ENCODE measurements at regions of chr7 and their contacts with region 1.

Region 1: GRCh38 chr7:106022193-106022821 is 59.2 kb downstream of the CDHR3 start:
- DNase-seq: peak; percentile 38 to 96 (median 93)
- ATAC-seq: peak; percentile 89
- H3K4me3 ChIP-seq: peak overlapping the region; percentile 23
- H3K4me3 Mint-ChIP-seq: peak overlapping the region; percentile 43 to 82 (median 68)
- H3K27ac ChIP-seq: peak overlapping the region; percentile 87
- H3K27ac Mint-ChIP-seq: peak overlapping the region; percentile 86 to 99 (median 98)
- H3K4me1 ChIP-seq: peaks cover 30 to 76% of the 10 kb centered on the region in 2 donors
- H3K4me1 Mint-ChIP-seq: peaks cover 23 to 89% (median 85%) of the 10 kb centered on the region in 7 donors
- H3K27me3 ChIP-seq: no peaks in the 10 kb centered on the region
- H3K27me3 Mint-ChIP-seq: peaks cover 0 to 15% (median 0%) of the 10 kb centered on the region in 5 donors

Region 2: GRCh38 chr7:105531792-105532671 is 490.3 kb before region 1 on chr7 and contains the start of gene RINT1:
- CTCF ChIA-PET with region 1: interaction called, 3 read pairs
- POLR2A ChIA-PET with region 1: interaction called, 4 read pairs
- intact Hi-C with region 1: loop called in 1 of 2 experiments (anchors 5 kb)
- DNase-seq: peak; percentile 72 to 90 (median 81)
- ATAC-seq: peak; percentile 97
- H3K4me3 ChIP-seq: peak within 1 kb of the TSS; percentile 86
- H3K4me3 Mint-ChIP-seq: peak within 1 kb of the TSS; percentile 87 to 99 (median 93)
- H3K27ac ChIP-seq: peak within 1 kb of the TSS; percentile 83
- H3K27ac Mint-ChIP-seq: peak within 1 kb of the TSS; percentile 87 to 98 (median 92)
- H3K4me1 ChIP-seq: peaks cover 13 to 18% of the 10 kb centered on the region in 2 donors
- H3K4me1 Mint-ChIP-seq: peaks cover 21 to 59% (median 38%) of the 10 kb centered on the region in 7 donors
- H3K27me3 ChIP-seq: no peaks in the 10 kb centered on the region
- H3K27me3 Mint-ChIP-seq: no peaks in the 10 kb centered on the region
- total RNA-seq, gene RINT1: 23.0 to 31.8 (median 26.0) TPM

Region 3: DNA sequence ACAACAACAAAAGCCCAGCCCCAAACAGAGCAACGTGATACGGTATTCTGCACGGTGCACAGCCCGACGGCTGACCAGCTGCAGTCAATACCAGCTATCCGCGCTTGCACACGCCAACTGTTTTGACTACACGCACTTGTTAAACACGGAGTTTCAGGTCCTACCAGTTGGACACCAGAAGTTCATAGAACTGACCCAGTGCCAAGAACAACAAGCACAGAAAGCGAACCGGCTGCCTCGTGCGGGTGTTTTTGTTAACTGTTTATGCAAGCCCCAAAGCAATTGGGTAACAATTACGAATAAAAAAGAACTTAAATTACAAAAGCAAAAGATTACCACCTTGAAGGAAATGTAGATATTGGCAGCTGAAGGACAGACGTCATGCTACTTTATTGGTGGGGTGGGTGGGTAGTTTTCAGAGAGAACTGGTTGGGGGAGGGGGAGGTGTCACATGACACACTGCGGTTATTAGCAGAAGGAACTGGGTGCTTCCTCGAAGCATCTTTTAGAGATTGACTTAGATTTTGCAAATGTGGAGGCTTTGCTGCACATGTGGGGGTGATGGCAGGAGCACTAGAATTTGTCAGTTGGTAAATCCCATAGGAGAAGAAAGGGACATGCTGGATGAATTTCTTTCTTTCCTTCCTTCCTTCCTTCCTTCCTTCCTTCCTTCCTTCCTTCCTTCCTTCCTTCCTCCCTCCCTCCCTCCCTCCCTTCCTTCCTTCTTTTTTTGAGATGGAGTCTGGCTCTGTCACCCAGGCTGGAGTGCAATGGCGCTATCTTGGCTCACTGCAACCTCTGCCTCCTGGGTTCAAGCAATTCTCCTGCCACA is 330.4 kb before region 1 on chr7:
- CTCF ChIA-PET with region 1: interaction called, 3 read pairs
- POLR2A ChIA-PET with region 1: interaction called, 13 read pairs
- intact Hi-C with region 1: loop called in 1 of 2 experiments (anchors 1 kb)
- DNase-seq: peak; percentile 22 to 94 (median 90)
- ATAC-seq: peak; percentile 89
- H3K4me3 ChIP-seq: peak overlapping the region; percentile 94
- H3K4me3 Mint-ChIP-seq: peak overlapping the region; percentile 84 to 98 (median 92)
- H3K27ac ChIP-seq: peak overlapping the region; percentile 83
- H3K27ac Mint-ChIP-seq: peak overlapping the region; percentile 95 to 100 (median 99)
- H3K4me1 ChIP-seq: peaks cover 19 to 21% of the 10 kb centered on the region in 2 donors
- H3K4me1 Mint-ChIP-seq: peaks cover 33 to 78% (median 65%) of the 10 kb centered on the region in 7 donors
- H3K27me3 ChIP-seq: no peaks in the 10 kb centered on the region
- H3K27me3 Mint-ChIP-seq: no peaks in the 10 kb centered on the region

Region 4: DNA sequence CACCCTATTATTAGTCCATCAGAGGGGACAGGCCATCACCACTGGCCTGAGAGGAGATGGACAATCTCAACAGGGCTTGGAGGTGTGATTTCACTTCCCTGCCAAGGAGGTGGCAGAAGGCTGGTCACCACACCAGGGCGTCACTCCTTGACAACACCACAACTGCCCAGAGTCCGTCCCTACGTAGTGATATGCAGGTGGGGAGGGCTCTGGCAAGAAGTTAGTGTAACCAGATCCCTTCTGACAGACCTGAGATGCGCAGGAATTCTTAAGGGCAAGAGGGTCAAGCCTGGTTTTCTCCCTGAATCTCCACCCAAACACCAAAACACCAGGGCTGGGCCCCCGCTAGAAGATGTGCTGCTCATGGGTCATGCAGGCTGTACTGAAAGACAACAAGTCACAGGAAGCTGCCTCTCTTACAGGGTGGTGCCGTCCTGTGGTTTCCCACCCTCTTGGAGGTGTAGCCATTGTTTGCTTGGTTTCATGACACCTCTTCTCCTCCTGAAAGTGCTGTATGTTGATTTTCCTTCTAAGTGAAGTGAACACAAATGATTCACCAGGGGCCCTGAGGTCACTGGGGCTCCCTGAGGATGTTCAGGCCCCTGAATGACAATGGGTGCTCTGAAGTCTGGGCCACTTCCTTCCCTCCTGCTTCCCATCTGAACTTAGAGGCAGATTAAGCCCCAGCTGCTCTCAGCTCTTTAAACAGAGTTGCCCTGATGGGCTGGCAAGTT is 173.0 kb before region 1 on chr7:
- CTCF ChIA-PET with region 1: interaction called, 3 read pairs
- POLR2A ChIA-PET with region 1: interaction called, 4 read pairs
- intact Hi-C with region 1: loop called in 1 of 2 experiments (anchors 1 kb)
- DNase-seq: peak; percentile 16 to 69 (median 60)
- ATAC-seq: peak; percentile 94
- H3K4me3 ChIP-seq: peak overlapping the region; percentile 38
- H3K4me3 Mint-ChIP-seq: peak overlapping the region; percentile 74 to 85 (median 83)
- H3K27ac ChIP-seq: peak overlapping the region; percentile 43
- H3K27ac Mint-ChIP-seq: peak overlapping the region; percentile 82 to 98 (median 92)
- H3K4me1 ChIP-seq: peaks cover 46 to 47% of the 10 kb centered on the region in 2 donors
- H3K4me1 Mint-ChIP-seq: peaks cover 44 to 78% (median 69%) of the 10 kb centered on the region in 7 donors
- H3K27me3 ChIP-seq: no peaks in the 10 kb centered on the region
- H3K27me3 Mint-ChIP-seq: peaks cover 0 to 2% (median 0%) of the 10 kb centered on the region in 5 donors

Region 5: DNA sequence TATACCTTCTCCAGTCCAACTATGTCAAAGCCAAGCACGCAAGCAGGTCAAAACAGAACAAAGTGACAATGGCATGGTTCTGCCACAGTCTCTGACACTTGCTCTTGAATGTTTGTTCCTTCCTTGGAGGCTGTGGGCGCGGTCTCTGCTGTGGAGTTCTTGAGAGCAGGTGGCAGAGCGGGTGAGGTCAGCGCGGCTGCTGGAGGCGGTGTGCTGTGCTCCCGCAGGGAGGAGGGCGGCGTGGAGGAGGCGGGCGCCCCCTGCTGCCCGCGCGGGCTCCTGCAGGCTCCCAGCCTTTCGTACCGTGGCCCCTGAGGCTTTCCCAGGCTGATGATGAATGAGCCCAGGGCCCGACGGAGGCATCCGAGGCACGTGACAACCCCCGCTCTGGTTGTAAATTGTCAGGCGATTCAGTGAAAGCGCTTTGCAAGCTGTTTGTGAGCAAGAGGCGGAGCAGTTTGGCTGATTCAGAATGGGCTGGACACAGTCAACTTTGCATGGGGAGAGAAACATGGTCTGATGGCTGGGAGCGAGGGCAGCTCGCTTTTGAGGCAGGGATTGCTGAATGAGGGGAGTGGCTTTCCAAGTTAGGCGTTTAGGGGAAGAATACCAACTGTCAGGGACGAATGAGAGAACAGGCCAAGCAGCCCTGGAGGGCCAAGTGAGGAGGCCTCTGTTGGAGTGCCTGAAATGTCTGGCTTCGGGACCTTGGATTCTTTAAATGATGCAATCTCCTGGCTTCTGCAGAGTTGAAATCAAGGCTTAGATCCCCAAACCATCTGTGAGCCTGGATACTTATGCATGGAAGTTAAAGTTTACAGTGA is 12.7 kb before region 1 on chr7:
- CTCF ChIA-PET with region 1: interaction called, 6 read pairs
- POLR2A ChIA-PET with region 1: interaction called, 8 read pairs
- intact Hi-C with region 1: loop called (anchors 1 kb)
- DNase-seq: peak; percentile 73 to 85 (median 81)
- ATAC-seq: peak; percentile 99
- H3K4me3 ChIP-seq: no peak overlapping the region
- H3K4me3 Mint-ChIP-seq: peak overlapping the region in 9 of 10 donors; percentile 36 to 69 (median 55)
- H3K27ac ChIP-seq: no peak overlapping the region
- H3K27ac Mint-ChIP-seq: peak overlapping the region in 7 of 9 donors; percentile 38 to 93 (median 86)
- H3K4me1 ChIP-seq: peaks cover 0 to 30% of the 10 kb centered on the region in 2 donors
- H3K4me1 Mint-ChIP-seq: peaks cover 17 to 51% (median 45%) of the 10 kb centered on the region in 7 donors
- H3K27me3 ChIP-seq: no peaks in the 10 kb centered on the region
- H3K27me3 Mint-ChIP-seq: peaks cover 0 to 42% (median 0%) of the 10 kb centered on the region in 5 donors

Region 6: GRCh38 chr7:106071356-106071998 is 49.2 kb after region 1 on chr7:
- CTCF ChIA-PET with region 1: interaction called, 5 read pairs
- POLR2A ChIA-PET with region 1: interaction called, 5 read pairs
- intact Hi-C with region 1: loop called (anchors 1 to 2 kb)
- DNase-seq: peak in 8 of 9 donors; percentile 50 to 75 (median 66)
- ATAC-seq: peak; percentile 97
- H3K4me3 ChIP-seq: peak overlapping the region; percentile 70
- H3K4me3 Mint-ChIP-seq: peak overlapping the region; percentile 74 to 84 (median 79)
- H3K27ac ChIP-seq: peak overlapping the region; percentile 80
- H3K27ac Mint-ChIP-seq: peak overlapping the region; percentile 93 to 99 (median 97)
- H3K4me1 ChIP-seq: peaks cover 26 to 49% of the 10 kb centered on the region in 2 donors
- H3K4me1 Mint-ChIP-seq: peaks cover 38 to 75% (median 64%) of the 10 kb centered on the region in 7 donors
- H3K27me3 ChIP-seq: no peaks in the 10 kb centered on the region
- H3K27me3 Mint-ChIP-seq: no peaks in the 10 kb centered on the region